Dendritic cell treated with granulocyte-macrophage colony-stimulating factor and Interleukin-4, amounts not matched to agents 40 ng/mL and 50 ng/mL, for 4 days (primary cell): ENCODE measurements at regions of chr19 and their contacts with region 1.

Region 1: DNA sequence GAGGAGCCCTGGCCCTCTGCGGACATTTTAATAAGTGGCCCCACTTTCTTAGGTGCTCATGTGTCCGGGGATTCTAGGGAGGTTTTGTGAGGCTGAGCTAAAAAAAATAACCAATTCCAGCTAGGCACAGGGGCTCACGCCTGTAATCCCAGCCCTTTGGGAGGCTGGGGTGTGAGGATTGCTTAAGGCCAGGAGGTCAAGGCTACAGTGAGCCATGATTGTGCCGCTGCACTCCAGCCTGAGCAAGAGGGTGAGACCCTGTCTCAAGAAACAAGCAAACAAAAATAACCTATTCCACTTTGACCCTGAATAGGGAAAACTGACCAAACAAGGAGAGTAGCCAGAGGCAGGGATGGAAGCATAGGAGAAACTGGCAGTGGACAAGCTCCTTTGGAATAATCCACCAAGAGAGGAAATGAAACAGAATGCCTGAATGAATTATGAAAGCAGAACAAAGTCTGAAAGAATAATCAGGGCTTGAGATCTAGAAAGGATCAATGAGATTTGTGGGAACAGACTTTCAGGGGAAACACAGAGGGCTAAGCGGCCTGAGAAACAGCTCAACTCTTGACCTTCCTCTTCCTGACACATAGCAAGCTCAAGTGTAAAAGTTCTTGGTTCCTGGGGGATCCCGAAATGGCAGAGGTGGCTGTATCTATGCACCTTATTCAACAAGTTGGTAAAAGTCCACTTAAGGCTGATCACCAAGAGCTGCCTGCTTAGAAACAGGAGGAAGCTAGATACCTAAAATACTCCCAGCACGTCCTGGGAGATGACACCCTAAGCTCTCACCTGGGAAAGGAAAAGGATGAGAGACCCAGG is 30.1 kb upstream of the FFAR2 start:
- H3K4me3 Mint-ChIP-seq: no peak overlapping the region
- H3K27ac Mint-ChIP-seq: no peak overlapping the region
- H3K4me1 Mint-ChIP-seq: peaks cover 21% of the 10 kb centered on the region
- H3K27me3 Mint-ChIP-seq: peaks cover 72% of the 10 kb centered on the region

Region 2: DNA sequence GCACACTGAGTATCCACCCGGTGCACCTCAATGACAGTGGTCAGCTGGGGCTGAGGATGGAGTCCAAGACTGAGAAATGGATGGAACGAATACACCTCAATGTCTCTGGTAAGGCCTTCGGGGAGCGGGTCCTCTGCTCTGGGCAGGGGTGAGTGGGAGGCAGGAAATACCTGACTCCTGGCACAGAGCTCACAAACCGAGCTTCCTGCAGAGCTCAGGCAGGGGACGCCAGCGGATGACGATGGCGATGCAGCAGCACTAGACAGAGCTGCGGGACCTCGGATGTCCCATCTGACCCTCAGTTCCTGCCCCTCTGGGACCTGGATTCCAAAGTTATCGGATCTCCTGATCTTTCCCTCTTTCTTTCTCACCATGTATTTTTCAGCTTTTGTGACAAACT is 85.1 kb before region 1 on chr19:
- intact Hi-C with region 1: no loop called
- H3K4me3 Mint-ChIP-seq: no peak overlapping the region
- H3K27ac Mint-ChIP-seq: no peak overlapping the region
- H3K4me1 Mint-ChIP-seq: peaks cover 21% of the 10 kb centered on the region
- H3K27me3 Mint-ChIP-seq: peaks cover 39% of the 10 kb centered on the region

Region 3: DNA sequence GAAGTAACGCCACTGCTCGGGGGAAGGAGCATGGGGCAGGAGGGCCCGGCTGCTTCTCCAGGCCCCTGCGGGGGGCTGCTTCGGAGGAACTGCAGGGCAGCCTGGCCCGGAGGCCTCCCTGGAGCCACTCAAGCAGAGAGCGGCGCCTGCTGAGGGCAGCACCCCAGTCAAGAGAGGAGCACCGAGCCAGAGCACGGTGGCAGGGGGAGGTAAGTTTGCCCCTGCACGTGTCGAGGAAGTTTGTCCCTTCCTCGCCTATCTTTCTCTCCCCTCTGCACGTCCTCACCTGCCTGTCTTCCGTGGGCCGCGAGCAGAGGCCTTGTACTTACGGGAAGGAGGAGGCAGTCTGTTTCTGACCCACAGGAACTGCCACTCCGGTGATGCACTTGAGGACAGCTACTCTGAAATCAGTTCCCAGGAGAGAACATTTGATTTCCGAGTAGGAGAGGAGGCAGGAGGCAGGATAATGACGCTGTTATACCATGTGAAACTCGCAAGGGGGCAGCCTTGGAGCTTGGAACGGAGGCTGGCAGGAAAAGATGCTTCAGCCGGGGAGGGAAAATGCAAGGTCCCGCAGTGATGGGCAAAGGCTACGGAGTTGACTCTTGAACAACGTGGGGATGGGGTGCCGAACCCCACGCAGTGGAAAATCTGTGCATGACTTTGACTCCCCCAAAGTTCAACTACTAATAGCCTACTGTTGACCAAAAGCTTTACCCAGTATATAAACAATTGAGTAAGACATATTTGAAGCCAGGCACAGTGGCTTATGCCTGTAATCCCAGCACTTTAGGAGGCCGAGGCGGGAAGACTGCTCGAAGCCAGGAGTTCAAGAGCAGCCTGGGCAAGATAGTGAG is 65.2 kb before region 1 on chr19:
- intact Hi-C with region 1: loop called (anchors 10 kb)
- H3K4me3 Mint-ChIP-seq: no peak overlapping the region
- H3K27ac Mint-ChIP-seq: no peak overlapping the region
- H3K4me1 Mint-ChIP-seq: peaks cover 51% of the 10 kb centered on the region
- H3K27me3 Mint-ChIP-seq: peaks cover 33% of the 10 kb centered on the region

Region 4: DNA sequence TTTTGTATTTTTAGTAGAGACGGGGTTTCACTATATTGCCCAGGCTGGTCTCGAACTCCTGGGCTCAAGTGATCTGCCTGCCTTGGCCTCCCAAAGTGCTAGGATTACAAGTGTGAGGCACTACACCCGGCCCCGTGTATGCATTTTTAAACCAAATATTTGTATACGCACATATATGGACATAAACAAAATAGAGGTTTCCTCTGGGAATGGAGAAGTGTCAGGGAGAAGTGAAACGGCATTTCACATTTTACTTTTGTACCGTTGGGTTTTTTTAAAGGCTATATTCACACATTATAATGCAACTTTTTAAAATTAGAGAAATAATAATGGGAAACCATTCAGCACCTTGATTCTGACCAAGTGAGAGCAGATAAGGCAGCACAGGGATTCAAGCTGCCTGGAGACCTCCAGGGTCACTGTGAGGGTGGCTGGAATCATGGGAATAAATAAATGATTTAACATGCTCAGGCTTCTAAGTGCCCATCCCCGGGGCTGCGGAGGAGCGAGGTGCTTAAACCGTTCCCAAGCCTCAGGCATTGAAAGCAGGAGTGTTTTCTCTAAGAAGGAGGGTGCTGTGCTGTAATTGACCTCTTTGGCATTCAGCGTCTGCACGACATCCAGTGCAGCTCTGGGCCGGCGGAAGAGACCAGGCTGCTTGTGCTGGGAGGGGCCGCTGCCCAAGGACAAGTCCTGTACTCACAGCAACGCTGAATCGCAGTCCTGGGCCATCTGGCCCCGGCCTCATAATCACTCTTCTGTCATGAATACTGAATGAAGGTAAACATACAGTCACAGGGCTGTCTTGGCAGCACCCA is 22.3 kb before region 1 on chr19:
- intact Hi-C with region 1: no loop called
- H3K4me3 Mint-ChIP-seq: no peak overlapping the region
- H3K27ac Mint-ChIP-seq: no peak overlapping the region
- H3K4me1 Mint-ChIP-seq: peaks cover 17% of the 10 kb centered on the region
- H3K27me3 Mint-ChIP-seq: peaks cover 22% of the 10 kb centered on the region

Region 5: GRCh38 chr19:35433448-35433847 is 15.5 kb after region 1 on chr19:
- intact Hi-C with region 1: loop called (anchors 1 kb)
- H3K4me3 Mint-ChIP-seq: no peak overlapping the region
- H3K27ac Mint-ChIP-seq: peak overlapping the region; percentile 16
- H3K4me1 Mint-ChIP-seq: peaks cover 81% of the 10 kb centered on the region
- H3K27me3 Mint-ChIP-seq: peaks cover 62% of the 10 kb centered on the region

Region 6: DNA sequence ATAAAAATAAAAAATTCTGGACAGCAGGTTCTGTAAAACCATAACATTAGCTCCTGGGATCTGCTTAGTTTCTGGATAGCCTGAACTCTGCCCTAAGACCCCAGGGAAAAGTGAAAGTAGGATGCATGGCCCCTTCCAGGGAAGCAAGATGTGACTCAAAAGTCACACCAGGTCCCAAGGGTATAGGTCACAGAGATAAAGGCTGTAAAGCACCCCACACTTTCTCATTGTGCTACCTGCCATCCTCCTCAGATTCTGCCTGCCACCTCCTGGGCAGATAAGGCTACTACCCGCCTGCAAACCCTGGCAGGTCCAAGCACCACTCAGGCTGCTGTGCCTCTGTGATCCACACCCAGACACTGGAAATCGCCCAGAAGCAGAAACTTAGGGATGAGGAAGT is 50.7 kb after region 1 on chr19:
- intact Hi-C with region 1: loop called (anchors 5 kb)
- H3K4me3 Mint-ChIP-seq: no peak overlapping the region
- H3K27ac Mint-ChIP-seq: no peak overlapping the region
- H3K4me1 Mint-ChIP-seq: peaks cover 17% of the 10 kb centered on the region
- H3K27me3 Mint-ChIP-seq: peaks cover 20% of the 10 kb centered on the region